Testis (tissue), 5 donors: ENCODE measurements at regions of chr18 and their contacts with region 1.

Region 1: GRCh38 chr18:8988261-8988871 is 114.1 kb upstream of the NDUFV2 start:
- DNase-seq: peak; percentile 64
- H3K4me3 ChIP-seq: no peak overlapping the region
- H3K27ac ChIP-seq: no peak overlapping the region
- H3K4me1 ChIP-seq: peaks cover 6% of the 10 kb centered on the region
- H3K27me3 ChIP-seq: no peaks in the 10 kb centered on the region
- CTCF ChIP-seq: peak in 2 of 3 experiments; percentile 34 to 69
- POLR2A ChIP-seq: no peak

Region 2: GRCh38 chr18:8704361-8705279 is 283.7 kb before region 1 on chr18:
- intact Hi-C with region 1: loop called (anchors 10 kb)
- DNase-seq: peak; percentile 91
- H3K4me3 ChIP-seq: peak overlapping the region; percentile 62 to 77
- H3K27ac ChIP-seq: peak overlapping the region; percentile 75 to 78
- H3K4me1 ChIP-seq: peaks cover 6% of the 10 kb centered on the region
- H3K27me3 ChIP-seq: no peaks in the 10 kb centered on the region
- CTCF ChIP-seq: no peak
- POLR2A ChIP-seq: no peak

Region 3: DNA sequence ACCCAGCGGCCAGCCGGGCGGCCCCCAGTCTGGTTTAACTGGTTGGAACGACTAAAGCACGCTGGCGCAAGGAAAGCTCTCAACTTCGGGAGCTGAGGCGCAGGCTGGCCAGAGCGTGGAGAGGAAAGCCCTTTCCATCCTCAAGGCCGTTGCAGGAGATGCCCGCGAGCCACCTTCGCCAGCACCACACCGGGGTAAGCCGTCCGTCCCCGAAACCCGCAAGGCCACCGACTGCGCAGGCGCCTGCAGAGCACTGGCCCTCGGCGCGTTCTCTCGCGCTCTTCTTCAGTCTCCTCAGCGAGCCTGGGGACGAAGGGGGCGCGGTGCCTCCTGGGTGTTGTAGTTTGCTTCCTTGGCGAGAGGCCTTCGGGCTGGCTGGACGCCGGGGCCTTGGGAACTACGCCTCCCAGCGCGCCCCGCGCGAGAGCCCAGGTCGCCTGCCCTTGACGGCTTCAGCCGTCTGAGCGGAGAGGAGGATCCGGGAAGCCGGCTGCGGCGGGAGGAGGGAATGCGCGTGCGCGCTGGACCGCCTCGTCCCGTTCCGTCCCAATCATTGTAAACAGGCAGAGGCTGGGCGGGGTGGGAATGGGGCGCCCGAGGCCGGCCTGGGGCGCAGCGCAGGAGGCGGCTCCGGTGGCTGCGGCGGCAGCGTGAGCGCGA is 486.7 kb after region 1 on chr18 and contains the start of gene RALBP1:
- intact Hi-C with region 1: no loop called
- DNase-seq: peak; percentile 99
- H3K4me3 ChIP-seq: peak within 1 kb of the TSS; percentile 85
- H3K27ac ChIP-seq: peak within 1 kb of the TSS; percentile 89 to 95
- H3K4me1 ChIP-seq: peaks cover 7% of the 10 kb centered on the region
- H3K27me3 ChIP-seq: no peaks in the 10 kb centered on the region
- CTCF ChIP-seq: peak; percentile 21 to 31 (median 24)
- POLR2A ChIP-seq: peak; percentile 25
- total RNA-seq, gene RALBP1: 46.3 to 59.8 TPM